Adrenal gland (tissue), 19 donors: ENCODE measurements at regions of chr5 and their contacts with region 1.

Region 1: GRCh38 chr5:172984243-172984953 is 827 bp downstream of the ATP6V0E1 start:
- DNase-seq: peak; percentile 67 to 93 (median 86)
- H3K4me3 ChIP-seq: peak overlapping the region; percentile 56 to 68 (median 64)
- H3K27ac ChIP-seq: peak overlapping the region; percentile 88 to 99 (median 92)
- H3K4me1 ChIP-seq: peaks cover 0 to 40% of the 10 kb centered on the region in 2 donors
- H3K27me3 ChIP-seq: no peaks in the 10 kb centered on the region
- CTCF ChIP-seq: peak; percentile 7 to 63 (median 50)
- POLR2A ChIP-seq: peak in 1 of 2 donors; percentile 35

Region 2: GRCh38 chr5:172616730-172617129 is 367.7 kb before region 1 on chr5:
- intact Hi-C with region 1: no loop called
- DNase-seq: peak in 6 of 7 donors; percentile 44 to 77 (median 60)
- H3K4me3 ChIP-seq: no peak overlapping the region
- H3K27ac ChIP-seq: peak overlapping the region in 4 of 5 donors; percentile 26 to 91 (median 70)
- H3K4me1 ChIP-seq: no peaks in the 10 kb centered on the region
- H3K27me3 ChIP-seq: no peaks in the 10 kb centered on the region
- CTCF ChIP-seq: no peak
- POLR2A ChIP-seq: no peak

Region 3: DNA sequence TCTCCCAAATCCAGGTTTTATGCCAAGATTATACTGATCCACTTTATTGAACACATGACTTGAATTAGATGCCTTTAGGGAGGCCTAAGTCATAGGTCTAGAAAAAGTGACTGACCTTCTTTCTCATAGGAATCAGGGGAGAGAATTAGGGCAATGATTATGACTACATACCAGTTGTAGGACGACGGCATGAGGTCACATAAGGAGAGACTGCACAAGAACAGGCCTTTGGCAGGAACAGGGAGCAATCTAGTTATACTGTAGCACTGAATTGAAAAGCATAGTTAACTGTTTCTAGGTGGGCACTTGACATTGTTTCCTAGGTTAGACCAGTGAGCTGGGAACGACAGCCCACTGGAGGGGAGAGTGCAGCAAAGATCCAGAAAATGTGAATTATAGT is 94.5 kb after region 1 on chr5:
- intact Hi-C with region 1: no loop called
- DNase-seq: peak in 1 of 7 donors; percentile 19
- H3K4me3 ChIP-seq: no peak overlapping the region
- H3K27ac ChIP-seq: no peak overlapping the region
- H3K4me1 ChIP-seq: peaks cover 0 to 14% of the 10 kb centered on the region in 2 donors
- H3K27me3 ChIP-seq: no peaks in the 10 kb centered on the region
- CTCF ChIP-seq: no peak
- POLR2A ChIP-seq: no peak

Region 4: GRCh38 chr5:173144200-173145176 is 160.1 kb after region 1 on chr5 and contains the start of gene BNIP1:
- intact Hi-C with region 1: loop called (anchors 5 kb)
- DNase-seq: peak; percentile 97 to 99 (median 99)
- H3K4me3 ChIP-seq: peak within 1 kb of the TSS; percentile 53 to 80 (median 70)
- H3K27ac ChIP-seq: peak within 1 kb of the TSS; percentile 66 to 93 (median 83)
- H3K4me1 ChIP-seq: no peaks in the 10 kb centered on the region
- H3K27me3 ChIP-seq: no peaks in the 10 kb centered on the region
- CTCF ChIP-seq: peak; percentile 81 to 97 (median 93)
- POLR2A ChIP-seq: peak; percentile 28 to 56
- total RNA-seq, gene BNIP1: 5.9 to 28.8 (median 14.2) TPM

Region 5: GRCh38 chr5:173278172-173278571 is 293.8 kb after region 1 on chr5:
- intact Hi-C with region 1: loop called (anchors 5 to 10 kb)
- DNase-seq: no peak
- H3K4me3 ChIP-seq: no peak overlapping the region
- H3K27ac ChIP-seq: no peak overlapping the region
- H3K4me1 ChIP-seq: no peaks in the 10 kb centered on the region
- H3K27me3 ChIP-seq: peaks cover 18% of the 10 kb centered on the region
- CTCF ChIP-seq: no peak
- POLR2A ChIP-seq: no peak

Region 6: GRCh38 chr5:173283318-173284288 is 299.2 kb after region 1 on chr5:
- intact Hi-C with region 1: loop called (anchors 5 to 10 kb)
- DNase-seq: peak; percentile 58 to 81 (median 73)
- H3K4me3 ChIP-seq: peak overlapping the region in 1 of 4 donors; percentile 4
- H3K27ac ChIP-seq: no peak overlapping the region
- H3K4me1 ChIP-seq: peaks cover 4 to 7% of the 10 kb centered on the region in 2 donors
- H3K27me3 ChIP-seq: peaks cover 36% of the 10 kb centered on the region
- CTCF ChIP-seq: peak; percentile 53 to 78 (median 62)
- POLR2A ChIP-seq: no peak